A549 (cell line): ENCODE measurements at regions of chr5 and their contacts with region 1.

Region 1: GRCh38 chr5:176415952-176416924 is at the start of gene CLTB:
- DNase-seq: peak; percentile 77 to 87
- ATAC-seq: peak; percentile 95 to 97
- H3K4me3 ChIP-seq: peak within 1 kb of the TSS; percentile 94
- H3K27ac ChIP-seq: peak within 1 kb of the TSS; percentile 80 to 91
- H3K4me1 ChIP-seq: peaks cover 16% of the 10 kb centered on the region
- CTCF ChIP-seq: peak; percentile 99
- EP300 ChIP-seq: no peak
- POLR2A ChIP-seq: peak; percentile 48; the same call in 1 of the 2 replicates
- RAD21 ChIP-seq: peak; percentile 79 to 97
- polyA plus RNA-seq, gene CLTB: 30.9 and 47.4 TPM in 2 replicates

Region 2: GRCh38 chr5:176355400-176356178 is 60.6 kb before region 1 on chr5:
- CTCF ChIA-PET with region 1: no interaction called
- POLR2A ChIA-PET with region 1: no interaction called
- DNase-seq: peak in 1 of 2 experiments; percentile 25
- ATAC-seq: peak in 1 of 2 experiments; percentile 79; a peak in 3 of 6 replicates
- H3K4me3 ChIP-seq: no peak overlapping the region
- H3K27ac ChIP-seq: no peak overlapping the region
- H3K4me1 ChIP-seq: peaks cover 11% of the 10 kb centered on the region; the same call in 1 of the 3 replicates
- CTCF ChIP-seq: no peak
- EP300 ChIP-seq: no peak
- POLR2A ChIP-seq: no peak
- RAD21 ChIP-seq: no peak

Region 3: DNA sequence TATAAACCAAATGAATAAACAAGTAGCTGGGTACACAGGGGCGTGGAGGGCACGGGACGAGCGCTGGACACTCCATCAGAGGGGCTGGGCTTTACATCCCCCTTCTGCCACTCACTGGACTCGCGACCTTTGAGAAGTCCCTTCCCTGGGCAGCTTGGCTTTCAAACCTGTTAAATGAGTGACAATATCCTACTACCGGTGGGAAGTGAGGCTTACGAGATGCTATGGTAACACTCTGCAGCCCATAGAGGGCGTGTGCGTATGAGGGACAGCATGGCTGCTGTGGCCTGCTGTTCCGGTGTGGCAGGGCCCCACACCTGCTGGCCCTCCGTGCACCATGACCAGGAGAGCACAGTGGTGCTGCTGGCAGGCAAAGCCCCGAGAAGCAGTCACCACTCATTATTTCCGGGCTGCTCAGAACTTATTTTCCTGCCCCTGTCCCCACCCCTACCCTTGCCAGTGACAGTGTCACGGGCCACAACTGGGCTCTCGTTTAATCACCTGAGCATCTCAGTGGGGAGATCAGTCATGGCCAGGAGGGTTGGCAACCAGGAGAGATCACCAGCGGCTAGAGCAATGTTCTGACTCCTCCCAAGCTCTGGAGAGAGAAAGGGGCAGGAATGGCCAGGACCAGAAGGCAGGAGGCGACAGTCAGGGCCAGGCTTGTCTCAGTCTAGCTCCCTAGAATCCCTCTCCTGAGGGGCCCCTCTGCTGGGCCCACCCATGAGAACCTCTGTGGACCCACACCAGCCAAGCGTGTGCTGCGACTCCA is 10.4 kb before region 1 on chr5:
- CTCF ChIA-PET with region 1: interaction called, 49 read pairs
- POLR2A ChIA-PET with region 1: no interaction called
- DNase-seq: peak in 1 of 2 experiments; percentile 44
- ATAC-seq: peak; percentile 70 to 80; a peak in 5 of 6 replicates
- H3K4me3 ChIP-seq: no peak overlapping the region
- H3K27ac ChIP-seq: no peak overlapping the region
- H3K4me1 ChIP-seq: peaks cover 9% of the 10 kb centered on the region; the same call in 2 of the 3 replicates
- CTCF ChIP-seq: 0 out of 3 replicates have a peak, but pooled peaks have one; percentile 16
- EP300 ChIP-seq: no peak
- POLR2A ChIP-seq: no peak
- RAD21 ChIP-seq: peak in 1 of 2 experiments; percentile 16; a peak in 1 of 5 replicates

Region 4: DNA sequence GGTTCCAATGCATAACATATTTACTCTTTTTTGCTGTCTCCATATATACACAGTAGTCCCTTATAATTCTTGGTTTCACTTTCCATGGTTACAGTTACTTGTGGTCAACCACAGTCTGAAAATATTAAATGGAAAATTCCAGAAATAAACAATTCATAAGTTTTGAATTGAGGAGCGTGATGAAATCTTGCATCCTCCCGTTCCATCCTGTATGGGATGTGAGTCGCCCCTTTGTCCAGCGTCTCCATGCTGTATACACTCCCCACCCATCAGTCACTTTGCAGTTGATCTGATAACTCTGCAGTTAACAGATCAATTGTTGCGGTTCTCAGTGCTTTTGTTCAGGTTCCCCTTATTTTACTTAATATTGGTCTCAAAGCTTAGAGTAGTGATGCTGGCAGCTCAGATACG is 20.4 kb after region 1 on chr5:
- CTCF ChIA-PET with region 1: interaction called, 16 read pairs
- POLR2A ChIA-PET with region 1: no interaction called
- DNase-seq: no peak
- ATAC-seq: peak in 1 of 2 experiments; percentile 41; a peak in 2 of 6 replicates
- H3K4me3 ChIP-seq: no peak overlapping the region
- H3K27ac ChIP-seq: no peak overlapping the region
- H3K4me1 ChIP-seq: peaks cover 18% of the 10 kb centered on the region; the same call in 2 of the 3 replicates
- CTCF ChIP-seq: no peak
- EP300 ChIP-seq: no peak
- POLR2A ChIP-seq: no peak
- RAD21 ChIP-seq: no peak

Region 5: DNA sequence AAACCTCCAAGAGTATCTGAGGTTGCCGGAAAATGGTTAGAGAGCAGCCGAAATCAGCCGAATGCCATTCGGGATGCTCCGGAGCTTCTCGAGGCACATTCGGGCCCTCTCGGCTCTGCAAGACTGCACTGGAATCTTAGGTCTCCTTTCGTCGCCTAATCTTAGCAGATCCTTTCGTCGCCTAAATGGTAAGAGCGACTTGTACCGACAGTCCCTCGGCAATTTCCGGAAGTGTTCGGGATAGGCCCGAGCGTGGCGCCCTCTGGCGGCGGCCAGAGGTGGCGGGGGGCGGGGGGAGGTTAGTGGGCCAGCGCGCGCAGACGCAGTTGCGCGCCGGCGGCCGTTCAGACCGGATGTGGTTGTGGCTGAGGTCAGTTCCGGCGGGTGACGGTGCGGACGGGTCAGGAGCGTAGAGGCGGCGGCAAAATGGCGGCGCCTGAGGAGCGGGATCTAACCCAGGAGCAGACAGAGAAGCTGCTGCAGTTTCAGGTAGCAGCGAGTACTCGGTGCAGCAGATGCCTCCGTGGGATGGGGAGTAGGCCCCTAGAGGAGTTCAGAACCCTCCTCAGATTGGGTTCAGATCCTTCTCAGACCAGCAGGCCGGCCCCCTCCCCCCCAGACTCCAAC is 31.9 kb after region 1 on chr5 and contains the start of gene FAF2:
- CTCF ChIA-PET with region 1: interaction called, 34 read pairs
- POLR2A ChIA-PET with region 1: interaction called, 14 read pairs
- DNase-seq: peak; percentile 99
- ATAC-seq: peak; percentile 95 to 97
- H3K4me3 ChIP-seq: peak within 1 kb of the TSS; percentile 83
- H3K27ac ChIP-seq: peak within 1 kb of the TSS; percentile 96
- H3K4me1 ChIP-seq: peaks cover 24% of the 10 kb centered on the region
- CTCF ChIP-seq: peak; percentile 96
- EP300 ChIP-seq: no peak
- POLR2A ChIP-seq: peak; percentile 83
- RAD21 ChIP-seq: peak in 1 of 2 experiments; percentile 28; a peak in 2 of 5 replicates
- polyA plus RNA-seq, gene FAF2: 90.3 and 90.6 TPM in 2 replicates

Region 6: GRCh38 chr5:176543428-176544173 is 127.4 kb after region 1 on chr5:
- CTCF ChIA-PET with region 1: interaction called, 37 read pairs
- POLR2A ChIA-PET with region 1: interaction called, 7 read pairs
- DNase-seq: peak; percentile 53 to 73
- ATAC-seq: peak; percentile 77 to 86
- H3K4me3 ChIP-seq: peak overlapping the region; percentile 66
- H3K27ac ChIP-seq: peak overlapping the region; percentile 89 to 95
- H3K4me1 ChIP-seq: peaks cover 51% of the 10 kb centered on the region
- CTCF ChIP-seq: no peak
- EP300 ChIP-seq: no peak
- POLR2A ChIP-seq: peak; percentile 78
- RAD21 ChIP-seq: no peak

Region 7: GRCh38 chr5:176608937-176609723 is 192.9 kb after region 1 on chr5:
- CTCF ChIA-PET with region 1: interaction called, 18 read pairs
- POLR2A ChIA-PET with region 1: no interaction called
- DNase-seq: no peak
- ATAC-seq: peak in 1 of 2 experiments; percentile 12; a peak in 4 of 6 replicates
- H3K4me3 ChIP-seq: peak overlapping the region; percentile 94
- H3K27ac ChIP-seq: peak overlapping the region; percentile 84 to 95
- H3K4me1 ChIP-seq: peaks cover 14% of the 10 kb centered on the region
- CTCF ChIP-seq: no peak
- EP300 ChIP-seq: no peak
- POLR2A ChIP-seq: no peak
- RAD21 ChIP-seq: no peak